ENCODE measurements at regions of chr16 and their contacts with region 1.

Region 1: GRCh38 chr16:75227361-75228142 is 8.8 kb downstream of the CTRB1 start:
- DNase-seq: peak in 4 of 6 donors; percentile 62 to 92 (median 82)
- ATAC-seq: peak; percentile 1 to 8 (median 4)
- H3K4me3 ChIP-seq: peak overlapping the region in 1 of 4 donors; percentile 1
- H3K27ac ChIP-seq: peak overlapping the region; percentile 42 to 93 (median 56)
- H3K4me1 ChIP-seq: no peaks in the 10 kb centered on the region
- H3K27me3 ChIP-seq: no peaks in the 10 kb centered on the region
- CTCF ChIP-seq: no peak

Region 2: GRCh38 chr16:75206749-75207451 is 20.7 kb before region 1 on chr16 and contains the start of gene CTRB2:
- intact Hi-C with region 1: loop called in 2 of 3 experiments (anchors 2 kb)
- DNase-seq: peak; percentile 82 to 96 (median 94)
- ATAC-seq: peak; percentile 52 to 77 (median 74)
- H3K4me3 ChIP-seq: peak within 1 kb of the TSS; percentile 45 to 83 (median 61)
- H3K27ac ChIP-seq: peak within 1 kb of the TSS; percentile 85 to 98 (median 92)
- H3K4me1 ChIP-seq: peaks cover 5 to 10% (median 7%) of the 10 kb centered on the region in 3 donors
- H3K27me3 ChIP-seq: no peaks in the 10 kb centered on the region
- CTCF ChIP-seq: no peak
- total RNA-seq, gene CTRB2: 36,685 to 57,899 (median 39,778) TPM

Region 3: DNA sequence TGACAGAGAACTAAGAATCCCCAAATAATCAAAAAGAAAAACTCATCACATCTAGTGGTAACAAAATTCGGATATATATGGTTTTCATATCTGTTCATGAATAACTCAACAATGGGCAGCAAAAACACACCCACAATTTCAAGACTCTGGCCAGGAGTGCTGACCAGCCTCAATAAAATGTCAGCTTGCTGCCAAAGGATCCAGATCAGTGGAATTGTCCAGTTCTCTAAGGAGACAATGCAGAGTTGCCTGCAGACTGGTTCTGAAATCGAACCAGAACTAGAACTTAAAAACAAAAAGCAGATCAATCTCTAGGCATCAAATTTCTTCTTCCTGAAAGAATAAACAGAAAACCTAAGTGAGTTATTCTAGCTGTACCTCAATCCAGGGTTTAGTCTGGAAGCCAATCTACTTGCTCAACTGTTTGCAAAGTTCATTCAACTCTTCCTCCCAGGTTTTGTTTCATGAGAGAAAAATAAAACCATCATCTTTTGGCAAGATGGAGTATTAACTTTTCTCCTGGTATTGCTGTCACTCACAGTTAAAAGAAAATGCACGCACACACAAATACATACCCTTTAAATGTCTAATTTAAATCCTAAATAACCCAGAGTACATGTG is 144.8 kb after region 1 on chr16:
- intact Hi-C with region 1: no loop called
- DNase-seq: no peak
- ATAC-seq: no peak
- H3K4me3 ChIP-seq: no peak overlapping the region
- H3K27ac ChIP-seq: no peak overlapping the region
- H3K4me1 ChIP-seq: peaks cover 0 to 4% (median 0%) of the 10 kb centered on the region in 3 donors
- H3K27me3 ChIP-seq: no peaks in the 10 kb centered on the region
- CTCF ChIP-seq: no peak